A549 (cell line): ENCODE measurements at regions of chr15 and their contacts with region 1.

Region 1: GRCh38 chr15:74127260-74127953 is 3.0 kb upstream of the ISLR2 start:
- DNase-seq: peak; percentile 52 to 86
- ATAC-seq: peak; percentile 88 to 96
- H3K4me3 ChIP-seq: peak overlapping the region; percentile 50
- H3K27ac ChIP-seq: peak overlapping the region; percentile 64 to 85
- H3K4me1 ChIP-seq: peaks cover 20% of the 10 kb centered on the region; the same call in 2 of the 3 replicates
- CTCF ChIP-seq: peak; percentile 93
- EP300 ChIP-seq: no peak
- POLR2A ChIP-seq: no peak
- RAD21 ChIP-seq: peak; percentile 96 to 98

Region 2: GRCh38 chr15:74302821-74303359 is 175.5 kb after region 1 on chr15:
- CTCF ChIA-PET with region 1: interaction called, 38 read pairs
- POLR2A ChIA-PET with region 1: no interaction called
- DNase-seq: peak; percentile 38 to 49
- ATAC-seq: peak; percentile 58 to 84; a peak in 3 of 6 replicates
- H3K4me3 ChIP-seq: no peak overlapping the region
- H3K27ac ChIP-seq: peak overlapping the region in 1 of 2 experiments; percentile 68; a peak in 3 of 6 replicates
- H3K4me1 ChIP-seq: peaks cover 19% of the 10 kb centered on the region
- CTCF ChIP-seq: peak; percentile 69
- EP300 ChIP-seq: no peak
- POLR2A ChIP-seq: no peak
- RAD21 ChIP-seq: peak; percentile 76 to 78